K562 (cell line): ENCODE measurements at regions of chr2 and their contacts with region 1.

Region 1: GRCh38 chr2:204434660-204435462 is 110.4 kb upstream of the PARD3B start:
- DNase-seq: peak in 2 of 4 experiments; percentile 56 to 66
- ATAC-seq: peak; percentile 86
- H3K4me3 ChIP-seq: no peak overlapping the region
- H3K27ac ChIP-seq: peak overlapping the region; percentile 74
- H3K4me1 ChIP-seq: peaks cover 0 to 28% of the 10 kb centered on the region in 2 experiments; a peak in 4 of 5 replicates
- H3K27me3 ChIP-seq: no peaks in the 10 kb centered on the region
- CTCF ChIP-seq: no peak
- EP300 ChIP-seq: peak; percentile 94
- POLR2A ChIP-seq: no peak
- RAD21 ChIP-seq: 0 out of 4 replicates have a peak, but pooled peaks have one; percentile 20 to 27

Region 2: GRCh38 chr2:204407204-204408070 is 27.4 kb before region 1 on chr2:
- CTCF ChIA-PET with region 1: no interaction called
- POLR2A ChIA-PET with region 1: no interaction called
- in situ Hi-C with region 1: no loop called
- intact Hi-C with region 1: loop called (anchors 2 kb)
- DNase-seq: peak; percentile 39 to 76 (median 54)
- ATAC-seq: peak; percentile 99
- H3K4me3 ChIP-seq: no peak overlapping the region
- H3K27ac ChIP-seq: peak overlapping the region; percentile 56
- H3K4me1 ChIP-seq: peaks cover 0 to 14% of the 10 kb centered on the region in 2 experiments; a peak in 4 of 5 replicates
- H3K27me3 ChIP-seq: no peaks in the 10 kb centered on the region
- CTCF ChIP-seq: no peak
- EP300 ChIP-seq: peak; percentile 75; the same call in 1 of the 2 replicates
- POLR2A ChIP-seq: no peak; the same call in 1 of the 2 replicates
- RAD21 ChIP-seq: peak in 1 of 2 experiments; percentile 19; a peak in 1 of 4 replicates

Region 3: GRCh38 chr2:205175831-205176230 is 741.0 kb after region 1 on chr2:
- CTCF ChIA-PET with region 1: no interaction called
- POLR2A ChIA-PET with region 1: no interaction called
- in situ Hi-C with region 1: no loop called
- intact Hi-C with region 1: no loop called
- DNase-seq: no peak
- ATAC-seq: no peak
- H3K4me3 ChIP-seq: no peak overlapping the region
- H3K27ac ChIP-seq: no peak overlapping the region
- H3K4me1 ChIP-seq: no peaks in the 10 kb centered on the region
- H3K27me3 ChIP-seq: no peaks in the 10 kb centered on the region
- CTCF ChIP-seq: no peak
- EP300 ChIP-seq: no peak
- POLR2A ChIP-seq: no peak
- RAD21 ChIP-seq: no peak